ENCODE measurements at regions of chr5 and their contacts with region 1.

Region 1: GRCh38 chr5:89435347-89435746 is 552.4 kb upstream of the MEF2C start:
- DNase-seq: no peak
- ATAC-seq: no peak
- H3K4me3 ChIP-seq: no peak overlapping the region
- H3K27ac ChIP-seq: no peak overlapping the region
- H3K4me1 ChIP-seq: peaks cover 21% of the 10 kb centered on the region
- H3K27me3 ChIP-seq: no peaks in the 10 kb centered on the region
- CTCF ChIP-seq: no peak

Region 2: DNA sequence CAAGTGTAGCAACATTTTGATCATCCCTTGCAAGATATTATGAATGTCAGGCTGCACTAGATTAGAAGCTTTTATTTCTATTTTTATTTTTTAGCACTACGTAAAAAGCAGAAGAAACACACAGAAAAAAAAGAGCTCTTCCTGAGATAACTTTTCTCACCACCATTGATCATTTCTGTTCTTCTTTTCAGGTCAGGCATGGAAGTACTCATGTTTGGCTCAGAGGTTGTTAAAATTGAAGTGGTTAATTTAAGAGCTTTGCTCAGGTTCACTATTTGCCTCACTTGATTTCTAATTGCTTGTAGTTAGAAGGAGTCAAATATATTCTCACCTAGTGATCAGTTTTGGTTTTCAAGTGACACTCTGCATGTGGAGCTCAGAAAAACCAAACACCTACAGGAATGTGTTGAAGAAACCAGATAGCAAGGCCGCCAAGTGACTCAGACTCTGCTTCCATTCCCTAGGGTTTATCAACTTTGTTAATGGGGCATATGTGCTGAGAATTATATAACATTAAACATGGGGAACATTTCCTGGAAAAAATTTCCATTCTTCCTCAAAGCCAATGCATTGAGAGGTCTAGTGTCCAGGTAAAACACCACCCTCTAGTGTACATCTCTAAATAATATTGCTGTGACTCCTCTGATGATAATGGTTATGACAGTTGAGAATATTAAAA is 294.4 kb after region 1 on chr5:
- intact Hi-C with region 1: loop called in 1 of 2 experiments (anchors 10 kb)
- DNase-seq: no peak
- ATAC-seq: peak in 3 of 4 donors; percentile 33 to 61 (median 59)
- H3K4me3 ChIP-seq: no peak overlapping the region
- H3K27ac ChIP-seq: peak overlapping the region; percentile 48
- H3K4me1 ChIP-seq: peaks cover 55% of the 10 kb centered on the region
- H3K27me3 ChIP-seq: no peaks in the 10 kb centered on the region
- CTCF ChIP-seq: peak; percentile 38

Measured in psoas muscle (tissue), 8 donors.